ENCODE measurements at regions of chr14 and their contacts with region 1.

Region 1: DNA sequence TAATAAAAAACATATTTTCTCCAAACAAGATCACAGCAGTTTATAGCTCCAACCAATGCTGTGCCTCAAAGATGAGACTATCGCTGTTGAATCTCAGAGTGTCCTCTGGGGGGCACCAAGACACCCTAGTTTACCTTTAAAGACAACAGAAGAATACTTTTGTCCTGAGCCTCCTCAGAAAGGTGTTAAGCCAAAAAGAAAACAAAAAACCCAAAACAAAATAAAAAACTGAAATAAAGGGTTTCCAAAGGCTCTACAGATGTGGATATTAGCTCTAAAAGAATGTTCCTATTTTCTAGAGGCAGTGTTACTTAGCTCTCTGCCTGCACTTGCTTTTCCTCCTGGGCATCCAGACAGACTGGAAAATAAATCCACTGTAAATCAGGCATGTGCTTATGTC is 86.9 kb upstream of the TTC7B start:
- DNase-seq: peak; percentile 33
- H3K4me3 Mint-ChIP-seq: no peak overlapping the region
- H3K27ac Mint-ChIP-seq: no peak overlapping the region
- H3K4me1 Mint-ChIP-seq: peaks cover 35% of the 10 kb centered on the region
- H3K27me3 Mint-ChIP-seq: no peaks in the 10 kb centered on the region

Region 2: GRCh38 chr14:91138511-91139359 is 235.6 kb after region 1 on chr14:
- intact Hi-C with region 1: loop called (anchors 1 kb)
- DNase-seq: peak; percentile 42
- H3K4me3 Mint-ChIP-seq: no peak overlapping the region
- H3K27ac Mint-ChIP-seq: peak overlapping the region; percentile 61
- H3K4me1 Mint-ChIP-seq: peaks cover 57% of the 10 kb centered on the region
- H3K27me3 Mint-ChIP-seq: no peaks in the 10 kb centered on the region

Region 3: DNA sequence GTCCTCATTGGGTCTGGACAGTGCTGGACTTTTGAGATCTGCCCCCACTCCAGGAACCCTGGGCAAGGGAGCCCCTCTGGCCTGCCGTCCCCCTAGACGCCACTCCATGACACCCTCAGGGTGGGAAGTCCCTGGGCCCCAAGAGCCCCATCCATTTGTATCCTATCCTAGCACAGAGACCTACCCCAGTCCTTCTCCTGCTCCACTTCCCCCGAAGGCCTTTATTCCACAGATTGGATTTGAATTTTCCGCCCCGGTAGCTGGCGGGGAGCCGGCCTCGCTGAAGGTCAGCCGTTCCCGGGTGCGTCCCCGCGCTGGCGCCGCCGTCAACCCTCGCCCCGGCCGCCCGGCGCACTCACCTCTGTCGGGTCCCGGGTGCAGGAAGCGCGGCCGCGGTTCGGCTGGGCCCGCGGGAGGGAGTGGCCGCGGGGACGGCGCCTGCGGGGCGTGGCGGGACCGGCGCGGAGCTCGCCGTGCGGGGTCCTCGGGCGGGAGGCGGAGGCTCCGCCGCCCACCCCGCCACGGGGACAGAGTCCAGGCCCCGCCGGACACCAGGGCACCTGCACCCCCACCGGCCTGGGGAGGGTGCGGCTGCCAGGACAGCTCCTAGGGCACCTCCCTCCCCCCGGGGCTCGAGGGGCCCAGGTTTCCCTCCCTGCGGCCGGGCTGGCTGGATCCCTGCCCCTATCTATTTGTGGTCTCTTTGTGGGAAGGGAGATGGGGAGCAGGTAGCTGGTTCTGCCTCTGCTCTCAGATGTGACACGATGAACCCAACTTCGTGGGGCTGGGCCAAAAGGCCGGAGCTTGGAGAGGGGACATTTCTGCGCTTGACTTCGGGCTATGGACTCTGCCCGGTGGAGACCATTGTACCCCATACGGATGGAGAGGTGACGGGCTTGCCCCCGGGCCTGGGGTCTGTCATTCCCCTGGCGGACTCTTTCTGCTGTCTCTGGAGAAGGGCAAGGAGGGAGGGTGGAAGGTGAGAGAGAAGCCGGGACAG is 361.4 kb after region 1 on chr14:
- intact Hi-C with region 1: loop called (anchors 5 kb)
- DNase-seq: no peak
- H3K4me3 Mint-ChIP-seq: peak overlapping the region; percentile 72
- H3K27ac Mint-ChIP-seq: peak overlapping the region; percentile 45
- H3K4me1 Mint-ChIP-seq: peaks cover 70% of the 10 kb centered on the region
- H3K27me3 Mint-ChIP-seq: no peaks in the 10 kb centered on the region

Region 4: GRCh38 chr14:91286530-91286937 is 383.4 kb after region 1 on chr14:
- intact Hi-C with region 1: loop called (anchors 1 kb)
- DNase-seq: peak; percentile 66
- H3K4me3 Mint-ChIP-seq: no peak overlapping the region
- H3K27ac Mint-ChIP-seq: peak overlapping the region; percentile 32
- H3K4me1 Mint-ChIP-seq: peaks cover 25% of the 10 kb centered on the region
- H3K27me3 Mint-ChIP-seq: no peaks in the 10 kb centered on the region